Left ventricle myocardium superior (tissue), 1 donor: ENCODE measurements at regions of chr5 and their contacts with region 1.

Region 1: DNA sequence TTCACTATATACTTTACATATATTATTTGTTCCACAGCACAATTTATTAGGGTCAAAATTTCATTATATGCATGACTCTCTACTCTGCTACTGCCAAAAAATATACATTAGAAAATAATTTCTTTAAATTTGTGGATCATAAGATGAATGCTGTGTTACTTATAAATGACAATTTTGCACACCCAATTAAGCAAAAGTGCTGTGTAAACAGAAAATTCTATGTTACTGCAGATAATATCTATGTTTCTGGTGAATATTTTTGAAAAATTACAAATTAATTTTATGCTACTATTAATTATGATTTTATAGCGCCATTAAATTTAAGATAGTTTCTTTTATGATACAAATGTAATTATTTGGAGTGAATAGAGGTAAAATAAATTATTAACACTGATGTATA is 59.8 kb upstream of the GABRA6 start:
- DNase-seq: no peak
- ATAC-seq: no peak

Region 2: GRCh38 chr5:161369022-161369421 is 256.7 kb before region 1 on chr5:
- intact Hi-C with region 1: loop called (anchors 10 kb)
- DNase-seq: no peak
- ATAC-seq: no peak

Region 3: DNA sequence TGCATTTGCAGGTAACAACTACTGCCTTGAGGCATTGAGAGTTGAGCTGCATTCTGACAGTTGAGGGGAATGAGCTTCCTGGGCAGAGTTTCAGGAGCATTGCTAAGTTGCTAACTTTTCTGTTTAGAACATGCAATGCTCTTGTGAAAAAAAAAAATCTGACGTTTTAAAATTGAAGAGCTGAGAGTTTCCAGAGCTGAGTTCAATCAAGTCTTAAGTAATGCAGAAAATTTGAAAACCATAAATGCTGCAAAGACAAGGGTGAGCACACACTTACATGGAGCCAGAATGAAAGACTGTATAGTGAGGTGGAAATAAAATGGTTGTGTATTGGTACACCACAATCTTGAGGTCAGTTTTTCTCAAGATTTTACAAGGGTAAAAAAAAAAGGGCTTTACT is 245.2 kb before region 1 on chr5:
- intact Hi-C with region 1: no loop called
- DNase-seq: no peak
- ATAC-seq: no peak

Region 4: GRCh38 chr5:161544350-161544765 is 81.3 kb before region 1 on chr5:
- intact Hi-C with region 1: no loop called
- DNase-seq: peak; percentile 27
- ATAC-seq: no peak

Region 5: GRCh38 chr5:161865510-161865909 is 239.8 kb after region 1 on chr5:
- intact Hi-C with region 1: no loop called
- DNase-seq: no peak
- ATAC-seq: no peak